ENCODE measurements at regions of chr6 and their contacts with region 1.

Region 1: DNA sequence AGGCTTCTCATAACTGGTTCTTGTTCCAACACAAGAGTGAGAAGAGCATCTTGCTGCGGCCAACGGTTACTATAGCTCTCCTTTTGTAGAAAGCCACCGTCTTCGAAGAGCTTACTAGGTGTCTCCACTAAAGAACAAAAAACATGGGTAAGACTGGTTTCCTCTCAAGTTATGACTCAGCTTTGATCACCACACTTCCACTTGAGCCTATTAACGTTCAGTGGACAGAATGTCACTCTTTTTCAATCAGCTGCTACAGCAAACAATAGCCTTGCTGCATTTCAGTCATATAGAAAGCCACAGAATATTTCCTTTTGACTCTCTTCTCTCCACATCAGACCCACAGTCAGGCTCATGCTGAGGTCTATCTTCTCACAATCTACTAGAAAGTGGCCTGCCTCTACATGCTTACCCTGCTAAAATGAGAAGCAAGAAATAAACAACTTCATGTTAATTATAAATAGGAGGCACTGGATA is 243.5 kb upstream of the PREP start:
- DNase-seq: peak; percentile 53
- ATAC-seq: peak; percentile 90
- H3K4me3 Mint-ChIP-seq: no peak overlapping the region
- H3K27ac Mint-ChIP-seq: no peak overlapping the region
- H3K4me1 Mint-ChIP-seq: peaks cover 62% of the 10 kb centered on the region
- H3K27me3 Mint-ChIP-seq: peaks cover 44% of the 10 kb centered on the region

Region 2: GRCh38 chr6:105459049-105459448 is 187.4 kb before region 1 on chr6:
- CTCF ChIA-PET with region 1: no interaction called
- POLR2A ChIA-PET with region 1: no interaction called
- intact Hi-C with region 1: loop called in 1 of 2 experiments (anchors 1 kb)
- DNase-seq: peak; percentile 53
- ATAC-seq: peak; percentile 84
- H3K4me3 Mint-ChIP-seq: peak overlapping the region; percentile 5
- H3K27ac Mint-ChIP-seq: peak overlapping the region; percentile 76
- H3K4me1 Mint-ChIP-seq: peaks cover 10% of the 10 kb centered on the region
- H3K27me3 Mint-ChIP-seq: peaks cover 21% of the 10 kb centered on the region

Region 3: DNA sequence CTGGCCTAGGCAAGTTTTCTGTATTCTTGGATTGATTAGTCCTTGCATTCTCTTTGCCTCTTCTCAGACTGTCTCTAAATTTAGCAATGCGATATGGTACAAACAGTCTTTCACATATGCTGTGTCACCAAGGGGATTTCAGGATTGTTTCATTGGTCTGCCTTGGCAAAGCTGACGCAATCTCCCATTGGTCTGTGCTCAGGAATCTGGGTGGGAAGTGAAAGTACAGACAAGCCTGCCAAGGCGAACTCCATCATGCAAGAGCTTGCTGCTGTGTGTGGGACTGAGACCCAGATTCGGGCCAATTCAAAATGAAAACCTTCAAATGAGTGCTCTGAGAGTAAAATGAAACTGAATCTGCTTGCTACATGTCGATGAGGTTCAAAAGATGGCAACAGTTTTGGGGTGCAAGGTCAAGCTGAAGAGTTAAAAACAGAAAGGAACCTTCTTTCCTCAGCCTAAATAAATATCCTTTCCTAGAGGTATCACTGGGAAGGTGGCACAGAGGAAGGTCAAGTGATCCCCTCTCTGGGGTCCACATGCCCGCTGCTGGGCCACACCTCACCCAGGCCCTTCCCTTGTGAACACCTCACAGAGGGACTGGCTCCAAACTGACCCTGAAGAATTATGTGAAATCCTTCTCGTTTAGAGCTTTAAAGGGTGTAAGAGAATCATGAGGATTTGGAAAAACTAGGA is 44.7 kb before region 1 on chr6:
- CTCF ChIA-PET with region 1: interaction called, 4 read pairs
- POLR2A ChIA-PET with region 1: no interaction called
- intact Hi-C with region 1: loop called in 1 of 2 experiments (anchors 1 kb)
- DNase-seq: peak; percentile 73
- ATAC-seq: peak; percentile 90
- H3K4me3 Mint-ChIP-seq: no peak overlapping the region
- H3K27ac Mint-ChIP-seq: peak overlapping the region; percentile 79
- H3K4me1 Mint-ChIP-seq: peaks cover 15% of the 10 kb centered on the region
- H3K27me3 Mint-ChIP-seq: peaks cover 8% of the 10 kb centered on the region

Region 4: GRCh38 chr6:105620878-105621277 is 25.6 kb before region 1 on chr6:
- CTCF ChIA-PET with region 1: interaction called, 3 read pairs
- POLR2A ChIA-PET with region 1: no interaction called
- intact Hi-C with region 1: loop called in 1 of 2 experiments (anchors 1 kb)
- DNase-seq: peak; percentile 31
- ATAC-seq: peak; percentile 99
- H3K4me3 Mint-ChIP-seq: no peak overlapping the region
- H3K27ac Mint-ChIP-seq: peak overlapping the region; percentile 2
- H3K4me1 Mint-ChIP-seq: peaks cover 6% of the 10 kb centered on the region
- H3K27me3 Mint-ChIP-seq: peaks cover 16% of the 10 kb centered on the region

Region 5: GRCh38 chr6:105678516-105678915 is 32.1 kb after region 1 on chr6:
- CTCF ChIA-PET with region 1: no interaction called
- POLR2A ChIA-PET with region 1: no interaction called
- intact Hi-C with region 1: no loop called
- DNase-seq: no peak
- ATAC-seq: no peak
- H3K4me3 Mint-ChIP-seq: no peak overlapping the region
- H3K27ac Mint-ChIP-seq: no peak overlapping the region
- H3K4me1 Mint-ChIP-seq: no peaks in the 10 kb centered on the region
- H3K27me3 Mint-ChIP-seq: peaks cover 2% of the 10 kb centered on the region

Region 6: GRCh38 chr6:105810105-105810921 is 163.9 kb after region 1 on chr6:
- CTCF ChIA-PET with region 1: no interaction called
- POLR2A ChIA-PET with region 1: no interaction called
- intact Hi-C with region 1: loop called in 1 of 2 experiments (anchors 5 kb)
- DNase-seq: peak; percentile 78
- ATAC-seq: peak; percentile 90
- H3K4me3 Mint-ChIP-seq: no peak overlapping the region
- H3K27ac Mint-ChIP-seq: no peak overlapping the region
- H3K4me1 Mint-ChIP-seq: peaks cover 37% of the 10 kb centered on the region
- H3K27me3 Mint-ChIP-seq: peaks cover 6% of the 10 kb centered on the region

Region 7: GRCh38 chr6:105898286-105898685 is 251.9 kb after region 1 on chr6:
- CTCF ChIA-PET with region 1: no interaction called
- POLR2A ChIA-PET with region 1: no interaction called
- intact Hi-C with region 1: loop called (anchors 2 to 5 kb)
- DNase-seq: peak; percentile 43
- ATAC-seq: peak; percentile 62
- H3K4me3 Mint-ChIP-seq: no peak overlapping the region
- H3K27ac Mint-ChIP-seq: no peak overlapping the region
- H3K4me1 Mint-ChIP-seq: peaks cover 24% of the 10 kb centered on the region
- H3K27me3 Mint-ChIP-seq: peaks cover 4% of the 10 kb centered on the region